Astrocyte of the cerebellum (primary cell): ENCODE measurements at regions of chr6 and their contacts with region 1.

Region 1: GRCh38 chr6:43774776-43775534 is 4.9 kb downstream of the VEGFA start:
- DNase-seq: no peak
- H3K4me3 ChIP-seq: peak overlapping the region; percentile 13
- CTCF ChIP-seq: peak; percentile 89

Region 2: GRCh38 chr6:43669922-43670622 is 104.9 kb before region 1 on chr6:
- in situ Hi-C with region 1: loop called (anchors 5 kb)
- DNase-seq: no peak
- H3K4me3 ChIP-seq: no peak overlapping the region
- CTCF ChIP-seq: no peak

Region 3: DNA sequence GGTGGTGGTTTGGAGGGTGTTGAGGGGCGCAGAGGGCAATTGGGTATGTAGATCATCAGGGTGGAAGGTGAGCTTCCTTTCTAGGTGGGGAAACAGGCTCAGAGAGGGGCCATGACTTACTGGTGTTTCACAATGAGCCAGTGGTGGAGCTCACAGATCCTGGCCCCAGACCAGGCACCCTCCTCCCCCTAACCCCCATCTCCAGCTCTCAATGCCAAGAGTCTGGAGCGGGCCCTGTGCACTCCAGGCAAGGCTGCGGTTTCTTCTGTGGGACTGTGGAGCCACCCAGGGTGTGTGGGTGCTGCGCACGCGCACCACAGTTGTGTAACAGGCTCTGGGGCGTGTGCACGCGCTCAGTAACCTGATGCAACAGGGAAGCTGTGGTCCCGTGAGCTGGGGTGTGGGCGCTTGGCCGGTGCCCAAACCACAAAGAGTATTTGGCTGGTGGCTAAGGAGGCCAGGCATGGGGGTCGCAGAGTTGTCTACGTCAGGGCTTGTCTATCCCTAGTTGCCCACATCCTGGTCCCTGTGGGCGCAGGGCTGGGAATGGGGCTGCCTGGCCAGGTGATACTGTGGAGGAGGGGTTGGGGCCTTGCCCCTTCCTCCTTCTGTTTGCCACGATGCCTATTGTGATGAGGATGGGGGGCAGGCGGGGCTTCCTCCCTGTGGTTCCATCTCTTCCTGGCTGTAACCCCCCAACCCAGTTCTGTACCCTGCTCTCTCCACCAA is 49.9 kb before region 1 on chr6:
- in situ Hi-C with region 1: no loop called
- DNase-seq: peak; percentile 85
- H3K4me3 ChIP-seq: no peak overlapping the region
- CTCF ChIP-seq: no peak

Region 4: DNA sequence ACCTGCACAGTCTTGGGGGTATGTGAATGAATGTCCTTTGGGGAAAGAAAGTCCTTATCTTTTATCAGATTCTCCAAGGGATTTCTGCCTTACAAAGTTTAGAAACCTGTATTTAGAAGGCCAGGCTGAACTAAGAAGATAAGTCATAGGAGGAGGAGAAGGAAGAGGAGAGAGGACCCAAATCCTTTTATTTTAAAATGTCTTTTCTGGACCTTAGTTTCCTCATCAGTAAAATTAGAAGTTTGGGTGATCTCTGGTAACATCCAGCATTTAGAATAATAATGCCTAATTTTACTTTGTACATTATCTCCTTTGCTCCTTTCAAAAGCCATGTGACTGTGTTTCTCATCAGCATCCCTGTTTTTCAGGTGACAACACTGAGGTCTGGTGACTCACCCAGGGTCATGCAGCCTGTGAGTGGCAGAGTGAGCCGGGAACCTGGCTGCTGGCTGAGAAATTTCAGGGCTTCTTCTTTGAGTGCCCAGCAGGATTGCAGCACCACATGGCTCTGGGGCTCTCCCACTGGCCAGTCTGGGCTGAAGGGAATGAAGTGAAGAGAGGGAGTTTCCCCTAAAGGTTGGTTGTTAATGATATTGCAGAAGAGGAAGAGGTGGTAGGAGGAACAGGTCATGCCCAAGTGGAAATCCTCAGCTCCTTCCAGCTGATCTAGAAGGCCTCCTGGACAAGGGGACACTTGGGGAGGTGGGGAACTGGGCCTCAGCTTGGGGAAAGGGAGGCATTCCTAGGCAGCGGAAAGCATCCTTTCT is 29.0 kb after region 1 on chr6:
- in situ Hi-C with region 1: no loop called
- DNase-seq: no peak
- H3K4me3 ChIP-seq: no peak overlapping the region
- CTCF ChIP-seq: no peak

Region 5: DNA sequence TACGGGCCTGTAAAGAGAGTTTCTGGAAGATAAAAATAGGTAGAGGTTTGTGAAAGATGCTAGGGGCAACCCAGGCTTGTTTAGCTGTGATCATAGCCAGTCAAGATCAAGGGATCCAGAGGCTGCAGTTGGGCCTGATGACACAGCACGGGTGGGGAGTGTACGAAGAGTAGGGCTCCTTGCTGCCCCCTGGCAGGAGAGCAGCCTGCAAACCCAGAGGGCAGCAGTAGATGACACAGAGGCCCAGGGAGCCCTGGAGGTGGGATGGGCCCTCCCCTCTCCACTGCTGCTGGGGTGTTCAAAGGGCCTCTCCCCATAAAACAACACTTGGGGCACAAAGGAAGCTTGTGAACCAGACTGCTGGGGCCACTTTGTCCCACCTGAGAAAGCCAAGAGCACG is 42.2 kb after region 1 on chr6:
- in situ Hi-C with region 1: loop called (anchors 5 kb)
- DNase-seq: no peak
- H3K4me3 ChIP-seq: no peak overlapping the region
- CTCF ChIP-seq: peak; percentile 19